Astrocyte of the cerebellum (primary cell): ENCODE measurements at regions of chr3 and their contacts with region 1.

Region 1: DNA sequence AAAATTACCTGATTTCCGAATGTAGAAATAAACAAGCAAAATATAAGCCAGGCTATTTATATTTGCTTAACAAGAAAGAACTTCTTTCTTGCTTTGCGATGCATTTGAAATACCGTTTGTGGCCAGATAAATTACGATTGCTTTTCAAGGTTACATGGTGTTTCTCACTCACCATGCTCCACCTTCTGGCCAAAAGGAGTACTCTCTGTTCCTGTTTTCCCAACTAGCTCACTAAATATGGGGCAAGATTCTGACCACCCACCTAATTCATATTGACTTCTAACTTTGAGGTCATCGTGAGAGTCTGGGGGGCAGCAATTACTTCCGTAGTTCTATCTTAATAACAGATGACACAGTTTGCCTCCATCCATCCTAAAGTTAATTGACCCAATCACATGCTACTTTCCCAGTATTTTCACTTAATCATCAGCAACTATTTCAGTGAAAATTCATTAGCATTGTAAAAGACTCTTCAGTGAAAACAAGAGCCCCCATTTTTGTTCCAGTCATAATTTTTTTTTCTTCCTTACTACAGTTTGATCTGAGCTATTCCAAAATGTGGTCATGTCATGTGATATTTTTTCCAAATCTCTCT is 25.9 kb downstream of the ACP3 start:
- DNase-seq: peak; percentile 51
- H3K4me3 ChIP-seq: no peak overlapping the region
- CTCF ChIP-seq: peak; percentile 89

Region 2: DNA sequence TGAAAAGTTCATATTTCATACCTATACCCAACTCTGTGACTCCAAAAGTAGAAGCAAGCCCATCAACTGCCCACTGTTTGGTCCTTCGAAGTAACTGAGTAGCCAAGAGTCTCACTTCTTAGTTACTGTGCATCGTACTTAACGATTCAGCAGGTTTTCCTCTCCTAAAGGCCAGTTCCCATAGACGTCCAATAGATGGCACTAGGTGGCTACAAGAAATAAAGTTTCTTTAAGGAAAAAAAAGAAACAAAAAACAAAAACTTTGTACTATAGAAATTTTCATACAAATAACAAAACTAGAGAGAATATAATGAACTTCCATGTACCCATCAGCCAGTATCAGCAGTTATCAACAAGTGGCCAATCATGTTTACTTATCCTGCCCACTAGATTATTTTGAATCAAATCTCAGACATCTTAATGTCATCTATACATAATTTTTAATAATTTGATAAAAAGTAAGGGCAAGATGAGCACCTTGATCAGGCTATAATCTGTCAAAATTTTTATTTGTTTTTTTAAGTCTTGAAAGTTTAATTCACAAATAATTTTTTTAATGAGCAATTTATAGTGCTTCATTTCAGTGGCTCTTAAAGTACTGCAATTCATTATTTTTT is 89.7 kb before region 1 on chr3:
- in situ Hi-C with region 1: loop called (anchors 5 kb)
- DNase-seq: peak; percentile 60
- H3K4me3 ChIP-seq: no peak overlapping the region
- CTCF ChIP-seq: peak; percentile 88

Region 3: GRCh38 chr3:132283440-132283839 is 59.7 kb before region 1 on chr3:
- in situ Hi-C with region 1: loop called (anchors 10 kb)
- DNase-seq: no peak
- H3K4me3 ChIP-seq: no peak overlapping the region
- CTCF ChIP-seq: no peak